ENCODE measurements at regions of chr11 and their contacts with region 1.

Region 1: GRCh38 chr11:30196400-30197206 is 34.2 kb upstream of the FSHB start:
- DNase-seq: peak; percentile 54
- H3K4me3 ChIP-seq: no peak overlapping the region
- H3K27ac ChIP-seq: no peak overlapping the region
- H3K4me1 ChIP-seq: no peaks in the 10 kb centered on the region
- H3K27me3 ChIP-seq: no peaks in the 10 kb centered on the region
- CTCF ChIP-seq: peak; percentile 71 to 82
- POLR2A ChIP-seq: no peak

Region 2: DNA sequence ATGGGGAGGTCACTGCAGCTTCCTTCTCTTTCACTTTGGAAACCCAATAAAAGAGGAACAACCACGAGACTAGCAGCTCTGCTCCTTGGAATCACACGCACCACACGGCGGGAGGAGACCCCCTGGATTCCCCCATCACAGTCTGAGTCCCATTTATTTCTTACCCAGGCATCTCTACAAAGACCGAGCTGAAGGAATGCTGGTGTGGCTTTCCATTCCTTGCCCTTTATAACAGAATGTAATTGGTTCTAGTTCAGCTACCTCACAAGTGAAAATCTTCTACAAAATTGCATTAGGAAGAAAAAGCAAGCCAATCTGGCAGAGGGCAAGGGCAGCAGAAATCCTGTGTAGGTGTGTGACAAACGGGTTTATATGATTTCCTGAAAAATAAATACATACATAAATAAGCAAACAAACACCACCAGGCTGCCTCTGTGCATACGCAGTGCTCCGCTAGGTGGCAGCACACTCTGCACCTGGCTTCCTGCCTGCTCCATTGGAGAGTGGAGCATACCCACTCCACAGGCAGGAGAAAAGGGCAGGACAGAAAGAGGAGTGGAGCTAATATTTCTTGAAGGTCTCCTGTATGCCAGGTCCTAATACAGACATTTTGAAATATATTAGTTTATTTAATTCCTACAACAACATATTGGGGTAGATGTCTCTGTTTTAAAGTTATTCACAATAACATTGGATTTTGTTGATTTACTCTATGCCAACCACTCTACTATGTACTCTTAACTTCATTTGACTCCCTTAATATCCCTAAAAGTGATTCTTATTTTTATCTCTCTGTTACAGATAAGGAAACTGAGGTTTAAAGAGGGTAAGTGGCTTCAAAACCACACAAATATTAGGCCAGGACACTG is 852.9 kb before region 1 on chr11:
- CTCF ChIA-PET with region 1: interaction called, 12 read pairs
- POLR2A ChIA-PET with region 1: no interaction called
- dilution Hi-C with region 1: no loop called
- intact Hi-C with region 1: no loop called
- DNase-seq: peak; percentile 58
- H3K4me3 ChIP-seq: no peak overlapping the region
- H3K27ac ChIP-seq: no peak overlapping the region
- H3K4me1 ChIP-seq: no peaks in the 10 kb centered on the region
- H3K27me3 ChIP-seq: no peaks in the 10 kb centered on the region
- CTCF ChIP-seq: peak; percentile 88 to 94
- POLR2A ChIP-seq: no peak